ENCODE measurements at regions of chr16 and their contacts with region 1.

Region 1: DNA sequence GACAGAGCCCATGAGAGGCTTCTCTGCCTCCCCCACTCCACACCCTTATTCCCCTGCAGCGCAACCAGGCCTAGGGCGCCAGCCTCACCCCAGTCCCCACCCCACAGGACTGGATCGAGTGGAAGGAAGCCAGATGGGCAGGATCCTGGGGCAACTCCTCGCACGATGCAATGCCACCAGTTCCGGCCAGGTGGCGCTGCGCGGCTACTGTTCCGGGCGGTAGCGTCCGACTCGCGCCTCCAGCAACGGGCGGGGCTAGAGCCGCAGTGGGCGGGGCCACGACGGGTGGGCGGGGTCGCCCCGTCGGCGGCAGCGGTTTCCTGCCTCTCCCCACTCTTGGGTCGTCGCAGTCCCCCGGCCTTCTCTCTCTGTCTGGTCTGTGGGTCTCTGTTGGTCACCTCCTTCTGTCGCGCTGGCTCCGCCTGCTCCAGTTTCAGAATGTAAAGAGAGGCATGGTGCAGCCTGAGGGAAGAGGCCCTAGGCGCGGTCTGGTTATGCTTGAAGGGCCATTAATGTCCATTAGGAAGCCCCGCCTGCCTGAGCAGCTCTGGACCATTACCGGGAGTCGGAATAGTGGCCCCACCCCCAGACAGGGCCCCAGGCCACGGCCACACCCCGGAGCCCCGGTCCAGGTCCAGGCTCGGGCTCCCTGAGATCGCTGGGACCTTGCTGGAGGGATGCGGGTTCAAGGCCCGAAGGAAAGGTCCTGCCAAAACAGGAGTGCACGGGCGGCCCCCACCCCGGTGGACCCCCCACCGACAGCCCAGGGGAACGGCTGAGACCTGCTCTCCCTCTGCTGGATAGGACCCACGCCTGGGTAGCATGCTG is 3.4 kb upstream of the NHERF2 start:
- DNase-seq: peak; percentile 87 to 88
- ATAC-seq: peak; percentile 80 to 83
- H3K4me3 ChIP-seq: peak overlapping the region; percentile 37 to 63 (median 44)
- H3K27ac ChIP-seq: peak overlapping the region; percentile 54 to 80 (median 64)
- H3K4me1 ChIP-seq: peaks cover 0 to 16% of the 10 kb centered on the region in 2 donors
- H3K27me3 ChIP-seq: peaks cover 27 to 33% (median 31%) of the 10 kb centered on the region in 3 donors
- CTCF ChIP-seq: peak; percentile 95 to 99 (median 98)
- POLR2A ChIP-seq: peak in 1 of 2 donors; percentile 48

Region 2: GRCh38 chr16:1918312-1918889 is 104.9 kb before region 1 on chr16 and contains the start of gene HS3ST6:
- in situ Hi-C with region 1: no loop called
- intact Hi-C with region 1: no loop called
- DNase-seq: no peak
- ATAC-seq: no peak
- H3K4me3 ChIP-seq: no peak within 1 kb of the TSS
- H3K27ac ChIP-seq: no peak within 1 kb of the TSS
- H3K4me1 ChIP-seq: no peaks in the 10 kb centered on the region
- H3K27me3 ChIP-seq: peaks cover 70 to 78% (median 74%) of the 10 kb centered on the region in 3 donors
- CTCF ChIP-seq: no peak
- POLR2A ChIP-seq: no peak
- total RNA-seq, gene HS3ST6: not detected

Region 3: GRCh38 chr16:1929578-1930337 is 93.6 kb before region 1 on chr16:
- in situ Hi-C with region 1: no loop called
- intact Hi-C with region 1: no loop called
- DNase-seq: peak; percentile 74 to 84
- ATAC-seq: peak; percentile 85 to 87
- H3K4me3 ChIP-seq: peak overlapping the region; percentile 49 to 69 (median 66)
- H3K27ac ChIP-seq: peak overlapping the region; percentile 52 to 83 (median 76)
- H3K4me1 ChIP-seq: no peaks in the 10 kb centered on the region
- H3K27me3 ChIP-seq: no peaks in the 10 kb centered on the region
- CTCF ChIP-seq: peak in 4 of 5 experiments; percentile 100
- POLR2A ChIP-seq: peak; percentile 17 to 31

Region 4: DNA sequence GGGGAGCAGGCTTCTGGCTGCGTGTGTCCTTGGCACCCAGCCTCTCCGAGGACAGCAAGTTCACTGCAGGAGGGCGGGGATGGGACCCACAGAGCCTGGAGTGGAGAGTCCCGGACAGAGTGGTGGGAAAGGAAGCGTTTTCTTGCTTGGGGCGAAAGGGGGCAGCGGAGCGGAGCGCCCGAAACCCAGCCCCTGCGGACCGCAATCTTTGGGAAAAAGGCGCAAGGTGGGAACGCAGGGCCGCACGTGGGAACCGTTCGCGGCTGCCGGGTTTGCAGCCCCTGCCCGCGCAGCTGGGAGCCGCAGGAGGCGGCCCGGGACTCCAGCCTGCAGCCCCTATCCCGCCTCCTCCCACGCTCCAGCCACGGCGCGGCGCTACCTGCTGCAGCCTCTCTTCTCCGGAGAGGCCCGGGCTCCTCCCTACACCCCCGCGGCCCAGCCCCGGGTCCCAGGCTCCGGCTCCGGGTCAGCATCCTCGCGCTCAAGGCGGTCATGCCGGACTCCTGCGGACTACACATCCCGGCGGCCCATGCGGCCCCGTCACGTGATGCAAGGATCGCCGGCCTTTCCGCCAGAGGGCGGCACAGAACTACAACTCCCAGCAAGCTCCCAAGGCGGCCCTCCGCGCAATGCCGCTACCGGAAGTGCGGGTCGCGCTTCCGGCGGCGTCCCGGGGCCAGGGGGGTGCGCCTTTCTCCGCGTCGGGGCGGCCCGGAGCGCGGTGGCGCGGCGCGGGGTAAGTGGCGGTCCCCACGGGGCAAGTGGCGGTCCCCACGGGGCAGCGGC is 24.2 kb after region 1 on chr16 and contains the starts of genes NTHL1 and TSC2:
- in situ Hi-C with region 1: no loop called
- intact Hi-C with region 1: loop called (anchors 1 kb)
- DNase-seq: peak; percentile 93 to 94
- ATAC-seq: peak; percentile 98 to 99
- H3K4me3 ChIP-seq: peak within 1 kb of the TSS; percentile 71 to 91 (median 86)
- H3K27ac ChIP-seq: peak within 1 kb of the TSS; percentile 70 to 88 (median 78)
- H3K4me1 ChIP-seq: peaks cover 19 to 30% of the 10 kb centered on the region in 2 donors
- H3K27me3 ChIP-seq: no peaks in the 10 kb centered on the region
- CTCF ChIP-seq: peak in 4 of 5 experiments; percentile 39 to 70 (median 49)
- POLR2A ChIP-seq: peak in 1 of 2 donors; percentile 45
- total RNA-seq, gene NTHL1: 3.5 to 13.6 (median 6.4) TPM
- total RNA-seq, gene TSC2: 44.5 to 62.7 (median 53.8) TPM

Region 5: DNA sequence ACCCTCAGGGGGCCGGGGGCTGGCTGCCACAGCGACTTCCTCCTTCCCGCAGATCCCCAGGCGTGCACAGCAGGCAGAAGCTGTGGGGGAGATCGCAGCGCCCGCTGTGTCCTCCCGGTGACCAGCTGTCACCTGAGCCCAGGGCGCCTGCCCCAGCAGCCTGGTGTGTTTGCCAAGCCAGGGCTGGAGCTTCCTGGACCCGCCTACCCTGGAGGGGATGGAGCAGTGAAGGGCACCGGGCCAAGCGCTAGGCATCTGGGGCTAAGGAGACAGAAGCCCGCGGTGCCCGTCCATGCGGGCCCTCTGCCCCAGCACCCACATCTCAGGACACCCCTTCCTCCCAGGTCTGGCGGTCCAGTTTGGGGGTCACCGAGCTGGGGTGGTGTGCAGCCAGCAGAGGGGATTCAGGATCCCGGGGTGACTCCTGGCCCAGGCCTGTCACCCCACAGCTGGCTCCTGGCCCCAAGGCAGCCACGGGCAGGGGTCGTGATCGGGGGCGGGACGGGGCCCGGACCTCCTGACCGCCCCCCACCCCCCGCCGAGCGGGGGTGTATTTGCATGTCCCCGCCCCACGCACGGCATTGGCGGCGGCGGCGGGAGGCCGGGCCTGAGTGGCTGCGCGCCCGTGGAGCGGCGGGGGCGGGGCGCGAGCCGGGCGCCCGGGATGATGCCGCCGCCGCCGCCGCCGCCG is 124.8 kb after region 1 on chr16 and contains the start of gene RAB26:
- in situ Hi-C with region 1: loop called in 2 of 4 experiments (anchors 5 to 10 kb)
- intact Hi-C with region 1: loop called (anchors 1 kb)
- DNase-seq: peak; percentile 89 to 94
- ATAC-seq: peak; percentile 91 to 92
- H3K4me3 ChIP-seq: peak within 1 kb of the TSS; percentile 57 to 68 (median 60)
- H3K27ac ChIP-seq: peak within 1 kb of the TSS; percentile 90 to 100 (median 96)
- H3K4me1 ChIP-seq: peaks cover 35 to 44% of the 10 kb centered on the region in 2 donors
- H3K27me3 ChIP-seq: no peaks in the 10 kb centered on the region
- CTCF ChIP-seq: peak in 1 of 5 experiments; percentile 9
- POLR2A ChIP-seq: peak in 1 of 2 donors; percentile 40
- total RNA-seq, gene RAB26: 1.3 to 4.2 TPM in 2 of 4 donors, not detected in the others

Region 6: GRCh38 chr16:2155091-2156021 is 132.0 kb after region 1 on chr16 and contains the start of gene TRAF7:
- in situ Hi-C with region 1: no loop called
- intact Hi-C with region 1: loop called (anchors 1 kb)
- DNase-seq: peak; percentile 99 to 100
- ATAC-seq: peak; percentile 95 to 98
- H3K4me3 ChIP-seq: peak within 1 kb of the TSS; percentile 71 to 89 (median 82)
- H3K27ac ChIP-seq: peak within 1 kb of the TSS; percentile 84 to 90 (median 86)
- H3K4me1 ChIP-seq: peaks cover 53 to 66% of the 10 kb centered on the region in 2 donors
- H3K27me3 ChIP-seq: no peaks in the 10 kb centered on the region
- CTCF ChIP-seq: peak in 1 of 5 experiments; percentile 3
- POLR2A ChIP-seq: peak; percentile 99
- total RNA-seq, gene TRAF7: 39.5 to 71.4 (median 55.9) TPM

Region 7: GRCh38 chr16:2251483-2252240 is 228.3 kb after region 1 on chr16 and contains the start of gene ECI1:
- in situ Hi-C with region 1: no loop called
- intact Hi-C with region 1: loop called (anchors 2 kb)
- DNase-seq: peak; percentile 93 to 95
- ATAC-seq: peak; percentile 92 to 96
- H3K4me3 ChIP-seq: peak within 1 kb of the TSS; percentile 68 to 89 (median 70)
- H3K27ac ChIP-seq: peak within 1 kb of the TSS; percentile 86 to 97 (median 92)
- H3K4me1 ChIP-seq: peaks cover 20 to 22% of the 10 kb centered on the region in 2 donors
- H3K27me3 ChIP-seq: no peaks in the 10 kb centered on the region
- CTCF ChIP-seq: peak; percentile 64 to 92 (median 87)
- POLR2A ChIP-seq: peak; percentile 87 to 94
- total RNA-seq, gene ECI1: 74.0 to 137 (median 79.3) TPM

Region 8: DNA sequence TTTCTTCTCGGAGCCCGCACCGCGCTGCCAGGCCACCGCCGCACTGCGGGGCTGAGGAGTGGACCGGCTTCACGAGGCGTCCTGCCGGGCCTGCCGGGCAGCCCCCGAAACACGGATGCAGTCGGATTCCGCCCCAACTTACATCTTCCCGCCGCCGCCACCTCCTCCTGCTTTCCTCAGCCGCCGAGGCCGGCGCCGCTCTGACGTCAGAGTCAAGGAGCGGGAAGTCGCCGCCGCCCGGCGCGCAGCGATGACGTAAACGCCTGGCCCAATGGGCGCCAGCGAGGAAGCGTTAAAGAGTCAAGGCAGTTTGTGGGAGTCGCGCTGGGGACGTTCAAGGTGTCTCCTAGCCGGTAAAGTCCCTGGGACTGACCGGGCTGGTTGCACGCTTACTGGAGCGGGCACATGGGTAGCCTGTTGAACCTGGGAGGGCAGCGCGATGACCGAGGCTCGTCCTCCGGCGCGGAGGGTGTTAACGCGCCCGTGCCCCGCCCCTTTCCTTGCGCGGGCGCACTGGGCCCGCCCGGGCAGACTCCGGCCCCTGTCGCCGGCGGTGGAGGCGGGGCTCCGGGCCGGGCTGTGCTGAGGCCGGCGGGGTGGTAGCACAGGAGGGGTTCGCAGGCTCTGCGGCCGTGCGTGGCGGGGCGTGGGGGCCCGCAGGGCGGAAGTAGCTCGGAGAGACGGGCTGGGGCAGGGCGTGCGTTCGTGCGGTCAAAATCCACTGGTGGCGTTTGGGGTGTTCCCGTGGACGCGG is 244.8 kb after region 1 on chr16 and contains the start of gene RNPS1:
- in situ Hi-C with region 1: no loop called
- intact Hi-C with region 1: no loop called
- DNase-seq: peak; percentile 87 to 93
- ATAC-seq: peak; percentile 91 to 93
- H3K4me3 ChIP-seq: peak within 1 kb of the TSS; percentile 68 to 94 (median 86)
- H3K27ac ChIP-seq: peak within 1 kb of the TSS; percentile 93 to 99 (median 96)
- H3K4me1 ChIP-seq: peaks cover 27 to 34% of the 10 kb centered on the region in 2 donors
- H3K27me3 ChIP-seq: no peaks in the 10 kb centered on the region
- CTCF ChIP-seq: peak in 2 of 5 experiments; percentile 35 to 63
- POLR2A ChIP-seq: peak; percentile 97 to 98
- total RNA-seq, gene RNPS1: 158 to 222 (median 172) TPM